WTC11 (cell line): ENCODE measurements at regions of chr18 and their contacts with region 1.

Region 1: GRCh38 chr18:686339-687111 is 25.9 kb downstream of the ENOSF1 start:
- DNase-seq: peak; percentile 54
- ATAC-seq: peak; percentile 88
- H3K4me3 Mint-ChIP-seq: peak overlapping the region; percentile 30
- H3K27ac Mint-ChIP-seq: peak overlapping the region; percentile 44
- H3K4me1 Mint-ChIP-seq: peaks cover 35% of the 10 kb centered on the region
- H3K27me3 Mint-ChIP-seq: no peaks in the 10 kb centered on the region
- CTCF ChIP-seq: no peak

Region 2: GRCh38 chr18:658001-658946 is 28.3 kb before region 1 on chr18:
- CTCF ChIA-PET with region 1: interaction called, 10 read pairs
- POLR2A ChIA-PET with region 1: interaction called, 4 read pairs
- DNase-seq: peak; percentile 90
- ATAC-seq: peak; percentile 80
- H3K4me3 Mint-ChIP-seq: peak overlapping the region; percentile 88
- H3K27ac Mint-ChIP-seq: peak overlapping the region; percentile 76
- H3K4me1 Mint-ChIP-seq: peaks cover 40% of the 10 kb centered on the region
- H3K27me3 Mint-ChIP-seq: no peaks in the 10 kb centered on the region
- CTCF ChIP-seq: no peak

Region 3: DNA sequence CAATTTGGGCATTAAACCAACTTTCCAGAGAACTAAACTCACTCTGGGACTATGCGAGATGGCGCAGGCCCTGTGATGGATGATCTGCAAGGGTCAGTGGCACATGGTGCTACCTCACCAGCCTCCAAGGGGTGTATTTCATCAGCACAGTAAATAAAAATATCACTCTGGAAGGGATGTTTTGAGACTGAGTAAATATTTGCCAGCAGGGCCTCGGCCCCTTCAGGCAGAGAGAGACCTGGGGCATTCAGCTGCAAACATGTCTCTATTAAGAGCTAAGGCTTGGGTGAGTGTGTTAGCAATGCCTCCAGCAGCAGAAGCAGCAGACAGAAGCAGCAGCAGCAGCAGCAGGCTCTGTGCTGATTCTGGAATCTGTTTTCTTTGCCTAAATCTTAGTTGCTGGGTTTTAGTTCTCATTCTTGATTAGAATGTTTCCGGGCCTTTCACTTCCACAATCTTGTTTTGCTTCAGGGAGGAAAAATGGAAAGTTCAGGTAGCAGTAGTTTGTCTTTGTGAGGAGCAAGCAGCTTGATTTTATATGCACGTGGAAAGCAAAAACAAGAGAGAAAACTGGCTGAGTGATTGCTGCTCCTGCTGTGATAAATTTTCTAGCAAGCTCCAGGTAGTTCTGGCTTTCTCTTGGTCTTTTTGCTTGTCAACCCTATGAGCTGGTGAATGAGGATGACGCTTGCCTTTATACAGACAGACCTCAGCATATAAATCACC is 236.8 kb after region 1 on chr18:
- CTCF ChIA-PET with region 1: no interaction called
- POLR2A ChIA-PET with region 1: no interaction called
- DNase-seq: no peak
- ATAC-seq: peak; percentile 58
- H3K4me3 Mint-ChIP-seq: no peak overlapping the region
- H3K27ac Mint-ChIP-seq: no peak overlapping the region
- H3K4me1 Mint-ChIP-seq: no peaks in the 10 kb centered on the region; the same call in 1 of the 2 replicates
- H3K27me3 Mint-ChIP-seq: peaks cover 40% of the 10 kb centered on the region
- CTCF ChIP-seq: no peak

Region 4: GRCh38 chr18:1104181-1104881 is 417.8 kb after region 1 on chr18:
- CTCF ChIA-PET with region 1: no interaction called
- POLR2A ChIA-PET with region 1: no interaction called
- DNase-seq: no peak
- ATAC-seq: no peak
- H3K4me3 Mint-ChIP-seq: no peak overlapping the region
- H3K27ac Mint-ChIP-seq: no peak overlapping the region
- H3K4me1 Mint-ChIP-seq: no peaks in the 10 kb centered on the region
- H3K27me3 Mint-ChIP-seq: no peaks in the 10 kb centered on the region
- CTCF ChIP-seq: no peak